ENCODE measurements at regions of chr12 and their contacts with region 1.

Region 1: GRCh38 chr12:120228291-120229070 is 27.6 kb upstream of the RPLP0 start:
- DNase-seq: peak; percentile 93
- H3K4me3 Mint-ChIP-seq: peak overlapping the region; percentile 53
- H3K27ac Mint-ChIP-seq: peak overlapping the region; percentile 86
- H3K4me1 Mint-ChIP-seq: peaks cover 86% of the 10 kb centered on the region
- H3K27me3 Mint-ChIP-seq: no peaks in the 10 kb centered on the region

Region 2: GRCh38 chr12:120093592-120094355 is 134.7 kb before region 1 on chr12:
- CTCF ChIA-PET with region 1: no interaction called
- POLR2A ChIA-PET with region 1: no interaction called
- DNase-seq: no peak
- H3K4me3 Mint-ChIP-seq: no peak overlapping the region
- H3K27ac Mint-ChIP-seq: no peak overlapping the region
- H3K4me1 Mint-ChIP-seq: peaks cover under 1% of the 10 kb centered on the region
- H3K27me3 Mint-ChIP-seq: no peaks in the 10 kb centered on the region

Region 3: DNA sequence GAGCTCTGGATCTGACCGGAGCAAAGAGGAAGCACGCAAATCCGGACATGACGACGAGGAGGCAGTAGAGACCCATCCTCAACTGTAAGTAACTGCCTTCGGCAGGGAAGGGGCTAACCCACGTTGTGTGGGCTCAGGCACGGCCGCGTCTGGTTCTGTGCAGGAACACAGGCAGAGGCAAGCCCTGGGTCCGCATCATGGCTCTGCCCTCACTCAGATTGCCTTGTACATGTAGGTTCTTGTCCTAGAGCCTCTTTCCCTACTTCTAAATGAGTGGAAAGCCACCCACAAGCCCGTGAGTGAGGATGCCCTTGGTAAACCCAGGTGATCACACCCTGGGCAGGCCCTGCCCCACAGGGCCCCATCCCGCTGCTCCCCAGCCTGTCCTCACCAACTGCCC is 18.6 kb before region 1 on chr12:
- CTCF ChIA-PET with region 1: interaction called, 10 read pairs
- POLR2A ChIA-PET with region 1: no interaction called
- DNase-seq: no peak
- H3K4me3 Mint-ChIP-seq: no peak overlapping the region
- H3K27ac Mint-ChIP-seq: no peak overlapping the region
- H3K4me1 Mint-ChIP-seq: no peaks in the 10 kb centered on the region
- H3K27me3 Mint-ChIP-seq: no peaks in the 10 kb centered on the region

Region 4: GRCh38 chr12:120265473-120266179 is 37.1 kb after region 1 on chr12 and contains the start of gene PXN:
- CTCF ChIA-PET with region 1: interaction called, 546 read pairs
- POLR2A ChIA-PET with region 1: interaction called, 6 read pairs
- DNase-seq: peak; percentile 88
- H3K4me3 Mint-ChIP-seq: peak within 1 kb of the TSS; percentile 88
- H3K27ac Mint-ChIP-seq: peak within 1 kb of the TSS; percentile 83
- H3K4me1 Mint-ChIP-seq: peaks cover 39% of the 10 kb centered on the region
- H3K27me3 Mint-ChIP-seq: no peaks in the 10 kb centered on the region
- total RNA-seq, gene PXN: 201 to 236 TPM

Region 5: GRCh38 chr12:120286796-120287465 is 58.5 kb after region 1 on chr12:
- CTCF ChIA-PET with region 1: interaction called, 48 read pairs
- POLR2A ChIA-PET with region 1: interaction called, 24 read pairs
- DNase-seq: no peak
- H3K4me3 Mint-ChIP-seq: no peak overlapping the region
- H3K27ac Mint-ChIP-seq: no peak overlapping the region
- H3K4me1 Mint-ChIP-seq: peaks cover 17% of the 10 kb centered on the region
- H3K27me3 Mint-ChIP-seq: peaks cover 12% of the 10 kb centered on the region

Region 6: GRCh38 chr12:120301962-120302815 is 73.7 kb after region 1 on chr12 and contains the start of gene SIRT4:
- CTCF ChIA-PET with region 1: interaction called, 12 read pairs
- POLR2A ChIA-PET with region 1: no interaction called
- DNase-seq: peak; percentile 95
- H3K4me3 Mint-ChIP-seq: peak within 1 kb of the TSS; percentile 87
- H3K27ac Mint-ChIP-seq: peak within 1 kb of the TSS; percentile 87
- H3K4me1 Mint-ChIP-seq: peaks cover 8% of the 10 kb centered on the region
- H3K27me3 Mint-ChIP-seq: no peaks in the 10 kb centered on the region
- total RNA-seq, gene SIRT4: 0.94 to 1.8 TPM

Region 7: GRCh38 chr12:120317224-120318105 is 89.0 kb after region 1 on chr12:
- CTCF ChIA-PET with region 1: no interaction called
- POLR2A ChIA-PET with region 1: no interaction called
- DNase-seq: peak; percentile 100
- H3K4me3 Mint-ChIP-seq: peak overlapping the region; percentile 87
- H3K27ac Mint-ChIP-seq: peak overlapping the region; percentile 96
- H3K4me1 Mint-ChIP-seq: peaks cover 16% of the 10 kb centered on the region
- H3K27me3 Mint-ChIP-seq: no peaks in the 10 kb centered on the region

Measured in activated CD4-positive, alpha-beta T cell treated with anti-CD3 and anti-CD28 coated beads, Interleukin-2, amount 10 ng/mL, durations not matched to agents 7 days and 5 days (primary cell).